AG04449 (cell line): ENCODE measurements at regions of chr5 and their contacts with region 1.

Region 1: GRCh38 chr5:77463905-77464304 is 28.2 kb downstream of the WDR41 start:
- DNase-seq: no peak
- H3K4me3 ChIP-seq: no peak overlapping the region
- CTCF ChIP-seq: no peak

Region 2: GRCh38 chr5:77449277-77449676 is 14.6 kb before region 1 on chr5:
- CTCF ChIA-PET with region 1: interaction called, 10 read pairs
- POLR2A ChIA-PET with region 1: no interaction called
- DNase-seq: no peak
- H3K4me3 ChIP-seq: no peak overlapping the region
- CTCF ChIP-seq: no peak